Heart left ventricle (tissue), 16 donors: ENCODE measurements at regions of chr18 and their contacts with region 1.

Region 1: DNA sequence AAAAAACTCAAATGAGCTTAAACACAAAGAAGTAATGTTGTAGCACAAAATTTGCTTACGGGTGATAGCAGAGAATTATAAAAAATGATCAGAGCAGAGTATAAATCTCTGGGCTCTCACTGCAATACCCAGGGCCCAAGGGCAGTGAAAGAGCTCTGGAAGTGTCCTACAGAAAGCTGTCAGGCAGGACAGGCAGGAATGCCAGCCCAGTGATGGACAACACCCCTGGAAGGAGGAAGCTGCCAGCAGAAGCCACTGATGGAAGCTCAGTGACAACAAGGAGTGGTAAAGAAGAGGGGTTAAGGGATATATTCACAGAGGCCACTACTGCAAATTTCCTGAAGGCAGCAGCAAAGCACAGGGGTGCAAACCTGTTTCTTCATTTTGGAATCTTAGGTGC is 214.9 kb downstream of the L3MBTL4 start:
- DNase-seq: no peak
- ATAC-seq: no peak
- H3K4me3 ChIP-seq: no peak overlapping the region
- H3K27ac ChIP-seq: no peak overlapping the region
- H3K4me1 ChIP-seq: no peaks in the 10 kb centered on the region
- H3K27me3 ChIP-seq: no peaks in the 10 kb centered on the region
- CTCF ChIP-seq: no peak
- POLR2A ChIP-seq: no peak

Region 2: GRCh38 chr18:6255116-6255705 is 55.4 kb after region 1 on chr18:
- intact Hi-C with region 1: loop called in 1 of 10 experiments (anchors 10 kb)
- DNase-seq: no peak
- ATAC-seq: peak in 3 of 4 donors; percentile 22 to 68 (median 64)
- H3K4me3 ChIP-seq: peak overlapping the region in 4 of 12 donors; percentile 15 to 47 (median 27)
- H3K27ac ChIP-seq: peak overlapping the region in 6 of 12 donors; percentile 13 to 80 (median 48)
- H3K4me1 ChIP-seq: peaks cover 0 to 34% (median 17%) of the 10 kb centered on the region in 12 donors
- H3K27me3 ChIP-seq: no peaks in the 10 kb centered on the region
- CTCF ChIP-seq: no peak
- POLR2A ChIP-seq: no peak